A673 (cell line): ENCODE measurements at regions of chr13 and their contacts with region 1.

Region 1: GRCh38 chr13:22387899-22388298 is 717.0 kb downstream of the FGF9 start:
- DNase-seq: no peak
- H3K4me3 ChIP-seq: no peak overlapping the region
- H3K27ac ChIP-seq: no peak overlapping the region
- H3K4me1 ChIP-seq: no peaks in the 10 kb centered on the region
- H3K27me3 ChIP-seq: no peaks in the 10 kb centered on the region
- CTCF ChIP-seq: no peak

Region 2: DNA sequence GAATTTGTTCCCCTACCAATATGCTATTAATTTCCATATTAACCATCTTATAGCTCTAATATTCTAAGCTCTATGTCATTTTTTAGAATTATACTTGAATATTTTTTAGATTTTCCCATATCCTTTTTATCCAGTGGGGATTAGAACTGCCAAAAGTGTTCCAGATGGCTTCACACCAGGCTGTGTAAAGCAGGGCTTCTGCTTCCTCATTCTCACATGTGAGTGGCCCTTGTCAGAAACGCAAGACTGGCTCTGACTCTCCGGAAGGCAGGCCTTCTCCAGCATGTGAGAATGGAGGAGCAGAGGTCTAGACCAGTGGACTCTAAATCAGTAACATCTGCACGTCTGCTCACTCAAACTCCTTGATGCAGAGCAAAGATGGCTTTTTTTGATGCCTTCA is 66.9 kb before region 1 on chr13:
- CTCF ChIA-PET with region 1: no interaction called
- POLR2A ChIA-PET with region 1: interaction called, 16 read pairs
- intact Hi-C with region 1: no loop called
- DNase-seq: no peak
- H3K4me3 ChIP-seq: no peak overlapping the region
- H3K27ac ChIP-seq: no peak overlapping the region
- H3K4me1 ChIP-seq: no peaks in the 10 kb centered on the region
- H3K27me3 ChIP-seq: no peaks in the 10 kb centered on the region
- CTCF ChIP-seq: no peak

Region 3: DNA sequence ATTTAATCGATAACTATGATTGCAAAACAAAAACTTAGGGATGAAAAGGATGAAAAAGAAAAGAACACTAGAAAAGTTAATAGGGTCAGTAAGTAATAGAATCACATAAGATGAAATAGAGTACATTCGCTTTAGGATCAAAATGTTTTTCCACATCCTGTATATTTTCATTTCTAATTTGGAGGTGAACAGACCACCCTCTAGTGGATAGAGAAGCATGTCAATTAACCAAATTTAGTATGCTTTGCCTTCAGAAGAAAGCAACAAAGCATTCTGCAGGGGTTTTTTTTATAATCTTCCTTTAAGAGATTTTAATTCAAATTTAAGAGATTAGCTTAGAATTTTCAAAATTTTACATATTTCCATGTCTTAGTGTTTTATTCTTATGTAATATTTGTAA is 181.9 kb after region 1 on chr13:
- CTCF ChIA-PET with region 1: no interaction called
- POLR2A ChIA-PET with region 1: no interaction called
- intact Hi-C with region 1: no loop called
- DNase-seq: no peak
- H3K4me3 ChIP-seq: no peak overlapping the region
- H3K27ac ChIP-seq: no peak overlapping the region
- H3K4me1 ChIP-seq: no peaks in the 10 kb centered on the region
- H3K27me3 ChIP-seq: no peaks in the 10 kb centered on the region
- CTCF ChIP-seq: no peak